Activated CD8-positive, alpha-beta T cell treated with anti-CD3 and anti-CD28 coated beads, Interleukin-2, amount 10 ng/mL, durations not matched to agents 7 days and 5 days (primary cell): ENCODE measurements at regions of chr5 and their contacts with region 1.

Region 1: GRCh38 chr5:141691867-141692532 is 10.0 kb upstream of the ARAP3 start:
- DNase-seq: peak; percentile 89
- ATAC-seq: peak; percentile 89
- H3K4me3 Mint-ChIP-seq: peak overlapping the region; percentile 71
- H3K27ac Mint-ChIP-seq: peak overlapping the region; percentile 75
- H3K4me1 Mint-ChIP-seq: peaks cover 28% of the 10 kb centered on the region
- H3K27me3 Mint-ChIP-seq: peaks cover 23% of the 10 kb centered on the region

Region 2: DNA sequence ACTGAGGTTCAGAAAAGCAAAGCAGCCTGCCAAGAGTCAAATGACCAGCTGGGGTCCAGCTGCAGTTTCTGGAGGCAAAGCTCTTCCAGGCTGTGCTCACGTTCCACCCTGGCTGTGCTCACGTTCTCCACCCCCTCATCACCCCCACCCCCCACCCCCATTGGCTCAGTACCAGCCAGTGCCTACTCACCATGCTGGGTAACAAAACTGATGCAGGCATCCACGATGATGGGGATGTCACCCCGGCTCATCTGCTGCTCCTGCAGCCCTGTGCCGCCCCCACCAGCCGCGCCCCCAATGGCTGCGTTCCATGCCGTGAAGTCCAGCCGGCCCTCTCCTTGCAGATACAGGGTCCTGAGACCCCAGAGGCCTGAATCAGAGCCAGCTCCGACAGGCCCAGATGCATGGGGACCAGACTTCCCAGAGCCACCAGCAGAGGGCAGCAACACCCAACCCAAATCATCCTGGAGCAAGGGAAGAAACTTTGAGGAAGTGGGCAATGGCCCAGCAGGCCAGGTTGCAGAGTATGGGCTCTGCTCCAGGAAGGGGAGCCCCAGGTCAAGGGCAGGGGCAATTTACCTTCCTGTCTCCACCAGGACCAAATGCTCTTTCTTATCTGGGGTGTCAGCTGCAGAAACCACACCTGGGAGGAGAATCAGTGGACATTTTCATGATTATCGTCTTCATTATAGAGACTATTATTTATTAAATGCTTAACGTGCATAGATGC is 27.1 kb before region 1 on chr5:
- CTCF ChIA-PET with region 1: interaction called, 30 read pairs
- POLR2A ChIA-PET with region 1: interaction called, 5 read pairs
- DNase-seq: peak; percentile 84
- ATAC-seq: peak; percentile 93
- H3K4me3 Mint-ChIP-seq: no peak overlapping the region
- H3K27ac Mint-ChIP-seq: peak overlapping the region; percentile 0
- H3K4me1 Mint-ChIP-seq: peaks cover 8% of the 10 kb centered on the region
- H3K27me3 Mint-ChIP-seq: no peaks in the 10 kb centered on the region

Region 3: DNA sequence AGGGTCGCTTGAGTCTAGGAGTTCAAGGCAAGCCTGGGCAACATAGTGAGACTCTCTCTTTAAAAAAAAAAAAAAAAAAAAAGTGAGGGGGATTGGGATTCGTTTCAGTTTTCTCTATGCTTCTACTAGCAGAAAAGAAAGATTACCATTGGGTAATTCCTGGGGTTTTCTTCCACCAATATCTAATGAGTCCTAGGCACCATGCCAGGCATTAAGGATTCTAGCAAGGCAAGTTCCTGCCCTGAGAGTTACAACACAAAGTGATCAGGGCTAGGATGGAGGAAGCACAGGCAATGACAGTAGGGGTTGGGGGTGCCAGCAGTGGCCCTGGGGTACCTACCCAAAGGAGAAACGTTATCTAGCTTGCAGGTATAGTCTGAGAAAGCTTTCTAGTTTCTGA is 95.4 kb after region 1 on chr5:
- CTCF ChIA-PET with region 1: no interaction called
- POLR2A ChIA-PET with region 1: no interaction called
- DNase-seq: no peak
- ATAC-seq: no peak
- H3K4me3 Mint-ChIP-seq: no peak overlapping the region
- H3K27ac Mint-ChIP-seq: no peak overlapping the region
- H3K4me1 Mint-ChIP-seq: no peaks in the 10 kb centered on the region
- H3K27me3 Mint-ChIP-seq: peaks cover 23% of the 10 kb centered on the region

Region 4: DNA sequence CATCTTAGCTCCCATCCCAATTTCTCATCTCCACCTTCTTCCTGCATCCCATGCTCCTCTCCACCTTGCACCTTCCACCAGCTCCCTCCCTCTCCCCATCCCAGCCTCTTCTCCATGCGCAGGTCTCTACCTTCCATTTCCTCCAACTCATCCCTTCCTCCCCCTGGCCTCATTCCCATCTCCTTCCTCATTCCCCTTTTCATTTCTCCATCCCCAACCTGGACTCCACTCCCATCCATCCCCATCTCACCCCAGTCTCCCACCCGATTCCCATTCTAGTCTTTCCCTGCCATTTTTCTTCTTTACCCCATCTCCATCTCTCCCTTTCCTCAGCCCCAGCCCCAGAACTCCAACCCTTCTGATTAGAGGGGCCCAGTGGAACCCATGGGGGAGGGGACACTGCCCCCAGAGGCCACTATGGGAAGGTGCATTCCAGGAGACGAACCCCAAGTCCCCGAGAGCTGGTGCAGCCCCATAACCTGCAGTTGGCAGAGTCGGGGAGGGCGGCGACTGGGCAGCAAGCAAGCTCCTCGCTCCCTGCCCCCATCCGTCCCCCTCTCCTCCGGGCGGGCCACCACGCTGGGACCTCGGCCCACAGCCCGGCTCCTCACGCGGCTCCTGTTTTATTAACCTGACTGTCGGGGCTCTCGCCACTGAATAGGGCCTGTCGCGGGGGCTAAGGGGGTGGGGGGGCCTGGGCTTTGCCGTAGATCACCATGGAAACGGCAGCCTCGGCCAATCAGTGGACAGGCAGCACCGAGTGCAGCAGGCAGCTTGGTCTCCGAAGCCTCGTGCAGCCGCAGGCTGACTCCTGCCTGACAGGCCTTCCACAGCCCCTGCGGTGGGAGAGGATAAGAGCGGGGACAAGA is 119.5 kb after region 1 on chr5:
- CTCF ChIA-PET with region 1: interaction called, 28 read pairs
- POLR2A ChIA-PET with region 1: no interaction called
- DNase-seq: peak; percentile 49
- ATAC-seq: peak; percentile 80
- H3K4me3 Mint-ChIP-seq: no peak overlapping the region
- H3K27ac Mint-ChIP-seq: no peak overlapping the region
- H3K4me1 Mint-ChIP-seq: peaks cover 10% of the 10 kb centered on the region
- H3K27me3 Mint-ChIP-seq: peaks cover 39% of the 10 kb centered on the region

Region 5: GRCh38 chr5:141923448-141924352 is 231.7 kb after region 1 on chr5 and contains the start of gene DELE1:
- CTCF ChIA-PET with region 1: interaction called, 11 read pairs
- POLR2A ChIA-PET with region 1: interaction called, 3 read pairs
- DNase-seq: peak; percentile 94
- ATAC-seq: peak; percentile 98
- H3K4me3 Mint-ChIP-seq: peak within 1 kb of the TSS; percentile 91
- H3K27ac Mint-ChIP-seq: peak within 1 kb of the TSS; percentile 93
- H3K4me1 Mint-ChIP-seq: peaks cover 38% of the 10 kb centered on the region
- H3K27me3 Mint-ChIP-seq: no peaks in the 10 kb centered on the region
- total RNA-seq, gene DELE1: 65.7 to 65.8 TPM

Region 6: DNA sequence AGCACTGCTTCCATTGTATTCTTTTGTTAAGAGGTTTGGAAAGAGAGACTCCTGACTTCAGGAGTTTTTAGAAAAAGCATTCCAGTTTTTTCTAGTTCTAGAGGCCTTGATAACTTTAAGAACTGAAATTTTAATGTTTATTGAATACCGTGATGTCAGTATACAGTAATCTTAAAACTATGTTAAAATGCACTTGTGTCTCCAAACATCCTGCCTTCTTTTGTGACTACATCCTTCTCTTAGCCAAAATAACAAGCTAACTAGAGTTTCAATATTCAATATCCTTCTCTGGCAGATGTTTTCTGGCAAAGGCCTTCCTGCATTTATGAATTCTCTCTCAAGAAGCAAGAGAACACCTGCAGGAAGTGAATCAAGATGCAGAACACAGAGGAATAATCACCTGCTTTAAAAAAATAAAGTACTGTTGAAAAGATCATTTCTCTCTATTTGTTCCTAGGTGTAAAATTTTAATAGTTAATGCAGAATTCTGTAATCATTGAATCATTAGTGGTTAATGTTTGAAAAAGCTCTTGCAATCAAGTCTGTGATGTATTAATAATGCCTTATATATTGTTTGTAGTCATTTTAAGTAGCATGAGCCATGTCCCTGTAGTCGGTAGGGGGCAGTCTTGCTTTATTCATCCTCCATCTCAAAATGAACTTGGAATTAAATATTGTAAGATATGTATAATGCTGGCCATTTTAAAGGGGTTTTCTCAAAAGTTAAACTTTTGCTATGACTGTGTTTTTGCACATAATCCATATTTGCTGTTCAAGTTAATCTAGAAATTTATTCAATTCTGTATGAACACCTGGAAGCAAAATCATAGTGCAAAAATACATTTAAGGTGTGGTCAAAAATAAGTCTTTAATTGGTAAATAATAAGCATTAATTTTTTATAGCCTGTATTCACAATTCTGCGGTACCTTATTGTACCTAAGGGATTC is 459.7 kb after region 1 on chr5:
- CTCF ChIA-PET with region 1: interaction called, 10 read pairs
- POLR2A ChIA-PET with region 1: no interaction called
- DNase-seq: peak; percentile 76
- ATAC-seq: peak; percentile 67
- H3K4me3 Mint-ChIP-seq: no peak overlapping the region
- H3K27ac Mint-ChIP-seq: no peak overlapping the region
- H3K4me1 Mint-ChIP-seq: no peaks in the 10 kb centered on the region
- H3K27me3 Mint-ChIP-seq: no peaks in the 10 kb centered on the region